ENCODE measurements at regions of chrX and their contacts with region 1.

Region 1: GRCh38 chrX:138925330-138925729 is 213.8 kb upstream of the FGF13 start:
- DNase-seq: peak; percentile 92
- ATAC-seq: peak; percentile 97
- H3K4me3 ChIP-seq: no peak overlapping the region
- H3K27ac ChIP-seq: peak overlapping the region; percentile 76
- H3K4me1 ChIP-seq: peaks cover 36% of the 10 kb centered on the region
- H3K27me3 ChIP-seq: no peaks in the 10 kb centered on the region
- CTCF ChIP-seq: no peak

Region 2: DNA sequence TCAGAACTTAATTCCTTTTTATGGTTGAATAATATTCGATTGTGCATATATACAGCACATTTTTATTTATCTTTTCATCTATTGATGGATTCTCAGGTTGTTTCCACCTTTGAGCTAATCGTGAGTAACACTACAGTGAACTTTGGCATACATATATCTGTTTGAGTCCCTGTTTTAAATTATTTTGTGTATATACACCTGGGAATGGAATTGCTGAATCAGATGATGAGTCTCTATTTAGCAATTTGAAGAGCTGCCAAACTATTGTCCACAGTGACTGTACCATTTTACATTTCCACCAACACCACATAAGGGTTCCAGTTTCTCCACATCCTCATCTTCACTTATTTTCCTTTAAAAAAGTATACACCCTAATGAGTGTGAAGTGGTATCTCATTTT is 47.6 kb before region 1 on chrX:
- CTCF ChIA-PET with region 1: no interaction called
- POLR2A ChIA-PET with region 1: no interaction called
- intact Hi-C with region 1: loop called (anchors 1 kb)
- DNase-seq: peak; percentile 92
- ATAC-seq: peak; percentile 91
- H3K4me3 ChIP-seq: 0 out of 2 replicates have a peak overlapping the region, but pooled peaks have one; percentile 30
- H3K27ac ChIP-seq: peak overlapping the region; percentile 86
- H3K4me1 ChIP-seq: peaks cover 13% of the 10 kb centered on the region
- H3K27me3 ChIP-seq: no peaks in the 10 kb centered on the region
- CTCF ChIP-seq: no peak

Region 3: DNA sequence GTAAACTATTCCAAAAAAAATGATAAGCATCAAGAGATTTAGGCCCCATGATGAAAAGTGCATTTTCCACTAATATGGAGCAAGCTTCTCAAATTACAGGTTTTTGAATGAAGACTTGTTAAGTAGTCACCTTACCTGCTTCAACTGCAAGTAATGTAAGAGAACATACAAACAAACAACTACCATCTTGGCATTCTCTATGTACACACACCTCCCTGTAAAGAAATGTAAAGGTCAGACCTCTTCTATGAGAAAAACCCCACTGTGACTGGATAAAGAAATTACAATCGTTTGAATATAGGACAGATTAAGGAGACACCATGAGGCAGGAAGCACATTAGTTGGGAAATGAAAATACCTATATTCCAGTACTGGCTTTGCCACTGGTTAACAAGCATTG is 53.6 kb after region 1 on chrX:
- CTCF ChIA-PET with region 1: no interaction called
- POLR2A ChIA-PET with region 1: no interaction called
- intact Hi-C with region 1: loop called (anchors 5 kb)
- DNase-seq: no peak
- ATAC-seq: no peak
- H3K4me3 ChIP-seq: no peak overlapping the region
- H3K27ac ChIP-seq: no peak overlapping the region
- H3K4me1 ChIP-seq: 0 out of 2 replicates have a peak, but pooled peaks cover 3% of the 10 kb centered on the region
- H3K27me3 ChIP-seq: no peaks in the 10 kb centered on the region
- CTCF ChIP-seq: no peak

Region 4: GRCh38 chrX:139039041-139039440 is 113.7 kb after region 1 on chrX:
- CTCF ChIA-PET with region 1: no interaction called
- POLR2A ChIA-PET with region 1: no interaction called
- intact Hi-C with region 1: no loop called
- DNase-seq: no peak
- ATAC-seq: no peak
- H3K4me3 ChIP-seq: no peak overlapping the region
- H3K27ac ChIP-seq: no peak overlapping the region
- H3K4me1 ChIP-seq: no peaks in the 10 kb centered on the region
- H3K27me3 ChIP-seq: no peaks in the 10 kb centered on the region
- CTCF ChIP-seq: no peak

Region 5: DNA sequence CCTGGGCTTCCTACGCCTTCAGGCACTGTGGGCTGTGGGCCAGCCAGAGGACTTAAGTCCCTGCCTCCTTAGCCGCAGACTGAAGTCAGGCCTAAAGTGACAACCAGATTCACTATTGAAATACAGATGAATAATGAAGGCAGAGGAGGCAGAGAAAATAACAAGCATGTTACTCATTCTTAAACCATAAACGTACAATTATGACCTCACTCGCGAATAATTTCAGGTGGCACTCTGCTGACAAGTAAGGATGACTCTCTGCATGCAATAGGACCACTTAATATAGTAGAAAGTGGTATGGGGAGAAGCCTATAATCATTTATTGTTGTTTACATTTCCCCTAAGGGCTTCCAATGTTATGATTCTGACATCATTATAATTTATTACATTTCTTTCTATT is 195.4 kb after region 1 on chrX:
- CTCF ChIA-PET with region 1: no interaction called
- POLR2A ChIA-PET with region 1: no interaction called
- intact Hi-C with region 1: loop called (anchors 5 kb)
- DNase-seq: peak; percentile 93
- ATAC-seq: peak; percentile 91
- H3K4me3 ChIP-seq: no peak overlapping the region
- H3K27ac ChIP-seq: peak overlapping the region; percentile 87
- H3K4me1 ChIP-seq: peaks cover 22% of the 10 kb centered on the region
- H3K27me3 ChIP-seq: no peaks in the 10 kb centered on the region
- CTCF ChIP-seq: no peak

Measured in PC-3 (cell line).